ENCODE measurements at regions of chr6 and their contacts with region 1.

Region 1: DNA sequence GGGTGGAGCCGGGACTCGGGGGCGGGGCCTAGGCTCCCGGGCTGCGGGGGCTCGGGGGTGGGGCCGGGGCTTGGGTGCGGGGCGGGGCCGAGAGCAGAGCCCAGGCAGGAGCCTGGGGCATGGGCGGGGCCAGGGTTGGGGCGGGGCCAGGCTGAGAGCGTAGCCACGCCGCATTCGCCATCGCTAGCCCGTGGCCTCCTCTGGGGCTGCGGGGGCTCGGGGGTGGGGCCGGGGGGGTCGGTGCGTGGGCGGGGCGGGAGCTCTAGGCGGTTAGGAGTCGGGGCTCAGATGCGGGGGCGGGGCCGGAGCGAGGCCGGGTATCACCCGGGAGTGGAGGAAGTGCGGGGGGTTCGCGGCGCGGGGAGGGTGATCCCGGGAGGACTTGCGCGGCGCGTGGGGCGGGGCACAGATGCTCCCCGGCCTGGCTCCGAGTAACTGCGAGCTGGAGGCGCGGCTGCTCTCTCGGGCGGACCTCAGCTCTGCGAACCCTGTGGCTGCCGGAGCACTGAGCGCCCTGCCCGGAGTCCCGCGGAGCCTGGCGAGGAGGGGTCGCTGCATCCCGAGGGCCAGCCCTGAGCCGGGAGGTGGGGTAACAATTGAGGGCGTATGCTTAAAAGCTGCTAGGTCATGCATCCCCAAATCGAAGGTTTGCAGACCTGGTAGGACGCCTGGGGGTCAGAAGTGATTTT is 434 bp upstream of the ECI2 start:
- DNase-seq: peak; percentile 96
- H3K4me3 Mint-ChIP-seq: peak overlapping the region; percentile 80
- H3K27ac Mint-ChIP-seq: peak overlapping the region; percentile 78
- H3K4me1 Mint-ChIP-seq: peaks cover 41% of the 10 kb centered on the region
- H3K27me3 Mint-ChIP-seq: no peaks in the 10 kb centered on the region

Region 2: GRCh38 chr6:3456755-3457466 is 678.9 kb before region 1 on chr6 and contains the start of gene SLC22A23:
- CTCF ChIA-PET with region 1: no interaction called
- POLR2A ChIA-PET with region 1: no interaction called
- intact Hi-C with region 1: loop called (anchors 5 kb)
- DNase-seq: peak; percentile 79
- H3K4me3 Mint-ChIP-seq: peak within 1 kb of the TSS; percentile 71
- H3K27ac Mint-ChIP-seq: no peak within 1 kb of the TSS
- H3K4me1 Mint-ChIP-seq: peaks cover 7% of the 10 kb centered on the region
- H3K27me3 Mint-ChIP-seq: peaks cover 7% of the 10 kb centered on the region
- total RNA-seq, gene SLC22A23: 0.90 to 1.0 TPM

Region 3: GRCh38 chr6:4018172-4018905 is 117.5 kb before region 1 on chr6:
- CTCF ChIA-PET with region 1: interaction called, 11 read pairs
- POLR2A ChIA-PET with region 1: interaction called, 32 read pairs
- intact Hi-C with region 1: loop called (anchors 1 kb)
- DNase-seq: peak; percentile 98
- H3K4me3 Mint-ChIP-seq: peak overlapping the region; percentile 90
- H3K27ac Mint-ChIP-seq: peak overlapping the region; percentile 97
- H3K4me1 Mint-ChIP-seq: peaks cover 63% of the 10 kb centered on the region
- H3K27me3 Mint-ChIP-seq: no peaks in the 10 kb centered on the region

Region 4: DNA sequence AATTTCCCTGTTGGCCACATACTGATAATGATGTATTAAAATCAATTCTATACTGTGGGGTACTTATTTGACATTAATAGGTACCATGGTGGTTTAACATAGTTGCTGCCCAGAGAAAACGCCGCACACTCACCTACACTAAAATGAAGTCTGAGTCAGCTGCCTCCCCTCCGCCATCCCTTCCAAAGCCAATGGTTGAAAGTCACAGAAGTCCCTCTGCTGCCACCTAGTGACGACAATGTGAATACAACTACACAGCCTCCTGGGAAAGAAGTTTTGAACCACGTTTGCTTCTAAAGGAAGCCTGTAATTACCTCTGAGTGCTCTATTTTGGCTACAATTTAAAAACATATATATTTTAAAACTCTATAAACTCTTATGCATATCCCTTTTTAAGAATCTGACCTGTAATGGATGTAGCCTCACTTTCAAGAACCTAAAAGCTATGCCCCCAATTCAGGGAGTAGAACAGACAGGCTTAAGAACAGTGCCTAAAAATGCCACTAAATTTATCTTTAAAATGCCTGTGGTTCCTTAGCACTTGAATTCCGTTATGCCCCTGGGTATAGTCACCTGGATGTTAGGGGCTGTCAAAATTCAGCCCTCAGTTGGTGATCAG is 20.1 kb after region 1 on chr6:
- CTCF ChIA-PET with region 1: interaction called, 24 read pairs
- POLR2A ChIA-PET with region 1: interaction called, 4 read pairs
- intact Hi-C with region 1: loop called (anchors 2 kb)
- DNase-seq: peak; percentile 86
- H3K4me3 Mint-ChIP-seq: no peak overlapping the region
- H3K27ac Mint-ChIP-seq: no peak overlapping the region
- H3K4me1 Mint-ChIP-seq: peaks cover 4% of the 10 kb centered on the region
- H3K27me3 Mint-ChIP-seq: peaks cover 9% of the 10 kb centered on the region

Region 5: DNA sequence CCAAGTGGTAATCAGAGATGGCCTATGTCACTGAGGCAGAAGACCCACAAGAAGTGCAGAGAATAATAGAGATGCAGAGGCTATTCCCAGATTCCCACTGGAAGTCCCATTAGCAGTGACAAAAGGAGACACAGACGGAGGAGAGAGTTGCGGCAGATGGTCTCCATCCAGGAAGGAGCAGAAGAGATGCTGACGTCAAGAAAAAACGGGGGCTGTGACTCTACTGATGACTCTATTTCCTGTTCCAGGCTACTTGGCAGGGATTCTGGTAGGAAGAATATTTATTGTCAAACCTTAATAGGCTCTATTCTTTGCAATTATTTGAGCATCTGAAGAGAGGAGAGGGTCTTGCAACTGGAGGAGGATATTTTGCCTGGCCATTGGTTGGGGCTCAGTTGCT is 245.6 kb after region 1 on chr6:
- CTCF ChIA-PET with region 1: no interaction called
- POLR2A ChIA-PET with region 1: no interaction called
- intact Hi-C with region 1: no loop called
- DNase-seq: no peak
- H3K4me3 Mint-ChIP-seq: no peak overlapping the region
- H3K27ac Mint-ChIP-seq: no peak overlapping the region
- H3K4me1 Mint-ChIP-seq: no peaks in the 10 kb centered on the region
- H3K27me3 Mint-ChIP-seq: peaks cover 12% of the 10 kb centered on the region